Calu3 (cell line): ENCODE measurements at regions of chr2 and their contacts with region 1.

Region 1: GRCh38 chr2:207632575-207633493 is 7.6 kb upstream of the METTL21A start:
- DNase-seq: peak; percentile 70
- H3K4me3 Mint-ChIP-seq: peak overlapping the region; percentile 10
- H3K27ac Mint-ChIP-seq: peak overlapping the region; percentile 64
- H3K4me1 Mint-ChIP-seq: peaks cover 21% of the 10 kb centered on the region
- H3K27me3 Mint-ChIP-seq: no peaks in the 10 kb centered on the region
- CTCF ChIP-seq: no peak

Region 2: GRCh38 chr2:207561386-207562080 is 71.3 kb before region 1 on chr2:
- CTCF ChIA-PET with region 1: no interaction called
- intact Hi-C with region 1: no loop called
- DNase-seq: no peak
- H3K4me3 Mint-ChIP-seq: no peak overlapping the region
- H3K27ac Mint-ChIP-seq: no peak overlapping the region
- H3K4me1 Mint-ChIP-seq: no peaks in the 10 kb centered on the region
- H3K27me3 Mint-ChIP-seq: no peaks in the 10 kb centered on the region
- CTCF ChIP-seq: no peak

Region 3: GRCh38 chr2:207676827-207677354 is 44.1 kb after region 1 on chr2:
- CTCF ChIA-PET with region 1: no interaction called
- intact Hi-C with region 1: loop called (anchors 2 kb)
- DNase-seq: no peak
- H3K4me3 Mint-ChIP-seq: no peak overlapping the region
- H3K27ac Mint-ChIP-seq: no peak overlapping the region
- H3K4me1 Mint-ChIP-seq: peaks cover 9% of the 10 kb centered on the region
- H3K27me3 Mint-ChIP-seq: no peaks in the 10 kb centered on the region
- CTCF ChIP-seq: no peak

Region 4: GRCh38 chr2:207734264-207734635 is 101.4 kb after region 1 on chr2:
- CTCF ChIA-PET with region 1: interaction called, 3 read pairs
- intact Hi-C with region 1: loop called (anchors 2 kb)
- DNase-seq: no peak
- H3K4me3 Mint-ChIP-seq: no peak overlapping the region
- H3K27ac Mint-ChIP-seq: no peak overlapping the region
- H3K4me1 Mint-ChIP-seq: no peaks in the 10 kb centered on the region
- H3K27me3 Mint-ChIP-seq: no peaks in the 10 kb centered on the region
- CTCF ChIP-seq: no peak

Region 5: DNA sequence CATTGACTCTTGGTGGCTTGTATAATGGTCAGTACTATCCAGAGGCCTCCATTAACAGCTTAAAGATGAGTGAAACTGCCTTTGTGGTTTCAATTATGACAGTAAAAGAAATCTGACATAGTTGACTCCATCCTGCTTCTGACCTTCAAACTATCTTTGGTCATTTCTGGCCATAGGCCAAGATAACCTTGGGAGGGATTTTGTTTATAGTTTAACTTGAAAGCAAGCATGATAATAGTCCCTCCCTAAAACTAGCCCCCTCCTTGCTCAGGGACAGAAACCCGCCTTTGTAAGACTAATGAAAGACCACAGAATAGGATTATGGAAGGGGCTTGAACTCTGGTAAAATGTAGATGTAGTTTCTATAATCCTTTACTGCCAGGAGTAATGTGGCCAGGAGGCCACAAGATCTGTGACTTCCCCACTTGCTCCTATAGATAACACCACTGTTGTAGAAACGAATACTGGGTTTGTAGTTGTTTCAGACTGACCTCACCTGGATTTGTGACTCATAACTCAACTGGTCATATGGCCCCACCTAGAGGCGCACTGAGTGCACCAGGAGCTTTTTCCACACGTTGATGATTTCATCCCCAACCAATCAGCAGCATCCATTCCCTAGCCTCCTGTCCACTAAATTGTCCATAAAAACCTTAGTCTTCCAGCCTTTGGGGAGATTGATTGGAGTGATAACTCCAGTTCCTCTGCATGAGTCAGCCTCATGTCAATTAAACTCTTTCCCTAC is 401.1 kb after region 1 on chr2:
- CTCF ChIA-PET with region 1: no interaction called
- intact Hi-C with region 1: loop called (anchors 10 kb)
- DNase-seq: peak; percentile 78
- H3K4me3 Mint-ChIP-seq: no peak overlapping the region
- H3K27ac Mint-ChIP-seq: peak overlapping the region; percentile 55
- H3K4me1 Mint-ChIP-seq: peaks cover 14% of the 10 kb centered on the region
- H3K27me3 Mint-ChIP-seq: no peaks in the 10 kb centered on the region
- CTCF ChIP-seq: peak; percentile 43